PC-3 (cell line): ENCODE measurements at regions of chr4 and their contacts with region 1.

Region 1: GRCh38 chr4:74267998-74268606 is 40.2 kb upstream of the EPGN start:
- DNase-seq: peak; percentile 94
- ATAC-seq: peak; percentile 94
- H3K4me3 ChIP-seq: peak overlapping the region; percentile 14; the same call in 1 of the 2 replicates
- H3K27ac ChIP-seq: peak overlapping the region; percentile 95
- H3K4me1 ChIP-seq: peaks cover 42% of the 10 kb centered on the region
- H3K27me3 ChIP-seq: no peaks in the 10 kb centered on the region
- CTCF ChIP-seq: no peak

Region 2: DNA sequence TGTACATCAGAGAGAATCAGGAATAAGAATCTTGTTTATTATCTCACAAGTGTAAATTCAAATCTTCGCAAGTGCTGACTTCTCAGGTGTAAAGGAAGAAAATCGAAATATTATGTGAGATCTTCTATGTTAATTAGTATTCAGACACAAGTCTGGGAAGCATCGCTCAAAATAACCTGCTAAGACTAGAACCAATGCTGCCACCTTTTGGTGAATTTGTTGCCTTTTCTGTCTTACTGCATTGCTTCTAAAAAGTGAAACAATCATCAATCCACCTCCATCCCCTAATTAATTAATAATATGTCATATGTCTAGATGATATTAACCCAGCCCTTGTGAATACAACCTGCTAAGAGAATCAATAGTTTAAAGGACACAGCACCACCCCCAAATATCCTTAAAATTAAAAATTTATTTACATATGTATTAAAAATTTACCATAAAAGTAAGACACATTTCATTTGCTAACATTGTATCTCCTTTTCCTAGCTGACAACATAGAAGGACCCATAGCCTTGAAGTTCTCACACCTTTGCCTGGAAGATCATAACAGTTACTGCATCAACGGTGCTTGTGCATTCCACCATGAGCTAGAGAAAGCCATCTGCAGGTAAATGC is 43.7 kb after region 1 on chr4:
- CTCF ChIA-PET with region 1: no interaction called
- POLR2A ChIA-PET with region 1: no interaction called
- intact Hi-C with region 1: loop called (anchors 1 kb)
- DNase-seq: peak; percentile 91
- ATAC-seq: peak; percentile 57
- H3K4me3 ChIP-seq: peak overlapping the region; percentile 69
- H3K27ac ChIP-seq: no peak overlapping the region
- H3K4me1 ChIP-seq: peaks cover 34% of the 10 kb centered on the region
- H3K27me3 ChIP-seq: no peaks in the 10 kb centered on the region
- CTCF ChIP-seq: peak; percentile 93